ENCODE measurements at regions of chr4 and their contacts with region 1.

Region 1: GRCh38 chr4:163544407-163545038 is 50.0 kb downstream of the TMA16 start:
- DNase-seq: peak; percentile 76
- H3K4me3 ChIP-seq: no peak overlapping the region
- H3K27ac ChIP-seq: no peak overlapping the region
- H3K4me1 ChIP-seq: peaks cover 7% of the 10 kb centered on the region
- CTCF ChIP-seq: peak; percentile 99

Region 2: DNA sequence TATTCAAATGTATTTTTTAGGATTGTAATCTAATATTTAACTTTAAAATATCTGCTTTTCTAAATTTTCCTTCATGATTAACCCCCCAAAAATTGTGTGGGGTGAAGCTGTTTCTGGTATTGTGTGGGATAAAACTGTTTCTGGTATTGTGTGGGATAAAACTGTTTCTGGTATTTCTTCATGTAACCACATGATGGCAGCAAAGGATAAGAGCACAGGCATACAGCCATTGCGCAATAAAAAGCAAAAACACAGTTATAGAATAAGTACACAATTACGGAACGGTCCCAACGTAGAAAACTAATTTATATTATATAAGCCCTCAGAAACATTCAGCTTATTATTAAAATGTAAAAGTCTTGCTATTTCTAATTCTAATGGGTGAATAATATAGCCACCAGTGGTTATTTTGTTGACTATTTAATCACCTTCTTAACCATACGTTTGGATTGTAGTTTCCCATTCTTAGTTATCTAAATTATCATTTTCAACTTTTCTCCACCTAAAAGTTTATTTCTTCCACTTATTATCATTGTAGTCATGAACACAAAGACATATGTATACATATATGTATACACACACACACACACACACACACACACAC is 1046.9 kb before region 1 on chr4:
- CTCF ChIA-PET with region 1: no interaction called
- POLR2A ChIA-PET with region 1: no interaction called
- intact Hi-C with region 1: loop called (anchors 2 kb)
- DNase-seq: peak; percentile 53
- H3K4me3 ChIP-seq: no peak overlapping the region
- H3K27ac ChIP-seq: no peak overlapping the region
- H3K4me1 ChIP-seq: no peaks in the 10 kb centered on the region
- CTCF ChIP-seq: peak; percentile 90

Region 3: GRCh38 chr4:163048447-163048846 is 496.1 kb before region 1 on chr4:
- CTCF ChIA-PET with region 1: no interaction called
- POLR2A ChIA-PET with region 1: interaction called, 3 read pairs
- intact Hi-C with region 1: loop called (anchors 5 kb)
- DNase-seq: peak; percentile 44
- H3K4me3 ChIP-seq: no peak overlapping the region
- H3K27ac ChIP-seq: no peak overlapping the region
- H3K4me1 ChIP-seq: no peaks in the 10 kb centered on the region
- CTCF ChIP-seq: peak; percentile 70

Region 4: DNA sequence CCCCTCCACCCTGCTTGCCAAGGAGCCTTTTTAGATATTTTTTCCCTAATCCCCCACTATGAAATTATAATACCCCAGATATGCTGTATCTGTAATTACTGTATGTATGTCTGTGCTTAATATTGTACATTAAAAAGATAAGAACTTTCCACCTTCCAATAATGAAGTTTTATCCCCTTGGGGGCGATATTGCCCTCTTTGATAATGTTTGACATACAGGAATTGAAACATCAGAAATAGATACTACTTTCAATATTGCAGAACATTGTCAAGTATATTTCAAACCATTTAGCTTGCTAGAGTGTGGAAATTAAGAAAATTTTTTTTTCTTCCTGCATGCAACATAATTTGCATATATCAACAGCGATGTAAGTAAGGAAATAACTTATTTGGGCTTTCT is 436.8 kb before region 1 on chr4:
- CTCF ChIA-PET with region 1: no interaction called
- POLR2A ChIA-PET with region 1: no interaction called
- intact Hi-C with region 1: loop called (anchors 5 kb)
- DNase-seq: no peak
- H3K4me3 ChIP-seq: no peak overlapping the region
- H3K27ac ChIP-seq: no peak overlapping the region
- H3K4me1 ChIP-seq: no peaks in the 10 kb centered on the region
- CTCF ChIP-seq: peak; percentile 69

Region 5: GRCh38 chr4:163166041-163166579 is 378.4 kb before region 1 on chr4:
- CTCF ChIA-PET with region 1: no interaction called
- POLR2A ChIA-PET with region 1: no interaction called
- intact Hi-C with region 1: loop called (anchors 10 kb)
- DNase-seq: peak; percentile 64
- H3K4me3 ChIP-seq: peak overlapping the region; percentile 96
- H3K27ac ChIP-seq: peak overlapping the region; percentile 53
- H3K4me1 ChIP-seq: peaks cover 12% of the 10 kb centered on the region
- CTCF ChIP-seq: no peak

Region 6: DNA sequence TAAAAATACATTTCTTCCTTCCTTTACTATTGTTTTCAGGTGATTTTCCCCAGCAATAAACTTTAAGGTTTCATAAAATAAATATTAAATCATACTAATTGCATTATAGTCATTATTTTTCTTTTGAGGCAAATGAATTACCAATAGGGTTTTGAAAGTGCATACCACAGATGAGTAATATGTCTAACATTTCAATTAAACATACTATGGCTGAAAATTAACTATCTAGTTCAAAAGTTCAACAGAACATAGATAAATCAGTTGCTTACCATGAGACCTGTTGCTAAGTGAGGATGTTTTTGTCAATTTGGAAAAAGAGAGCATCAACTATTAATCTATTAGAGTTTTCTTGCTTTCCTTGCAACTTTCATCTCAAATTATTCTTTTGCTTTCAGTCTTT is 165.9 kb before region 1 on chr4:
- CTCF ChIA-PET with region 1: no interaction called
- POLR2A ChIA-PET with region 1: no interaction called
- intact Hi-C with region 1: loop called (anchors 10 kb)
- DNase-seq: no peak
- H3K4me3 ChIP-seq: no peak overlapping the region
- H3K27ac ChIP-seq: no peak overlapping the region
- H3K4me1 ChIP-seq: no peaks in the 10 kb centered on the region
- CTCF ChIP-seq: no peak

Region 7: DNA sequence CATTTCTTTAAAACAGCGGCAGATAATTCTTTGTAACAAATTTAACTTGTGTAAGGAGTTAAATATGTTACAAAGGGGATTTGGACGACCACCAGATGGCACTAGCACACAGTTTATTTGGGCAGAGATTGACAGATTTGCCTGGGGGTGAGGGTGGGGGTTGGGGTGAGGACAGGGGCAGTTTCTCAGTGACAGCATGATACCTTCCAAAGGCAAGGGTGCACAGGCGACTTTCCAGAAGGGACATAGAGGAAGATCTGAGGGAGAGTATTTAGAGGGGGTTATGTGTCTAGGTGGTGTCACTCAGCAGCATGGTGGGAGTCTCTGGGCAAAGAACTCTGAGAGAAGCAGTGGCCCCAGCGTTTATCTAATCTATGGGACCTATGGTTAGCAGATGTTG is 59.6 kb before region 1 on chr4:
- CTCF ChIA-PET with region 1: interaction called, 12 read pairs
- POLR2A ChIA-PET with region 1: interaction called, 4 read pairs
- intact Hi-C with region 1: loop called (anchors 1 kb)
- DNase-seq: peak; percentile 77
- H3K4me3 ChIP-seq: no peak overlapping the region
- H3K27ac ChIP-seq: no peak overlapping the region
- H3K4me1 ChIP-seq: peaks cover 30% of the 10 kb centered on the region
- CTCF ChIP-seq: peak; percentile 96

Region 8: GRCh38 chr4:163611784-163612445 is 67.4 kb after region 1 on chr4:
- CTCF ChIA-PET with region 1: no interaction called
- POLR2A ChIA-PET with region 1: no interaction called
- intact Hi-C with region 1: no loop called
- DNase-seq: no peak
- H3K4me3 ChIP-seq: peak overlapping the region; percentile 32
- H3K27ac ChIP-seq: no peak overlapping the region
- H3K4me1 ChIP-seq: peaks cover 64% of the 10 kb centered on the region
- CTCF ChIP-seq: no peak

Region 9: DNA sequence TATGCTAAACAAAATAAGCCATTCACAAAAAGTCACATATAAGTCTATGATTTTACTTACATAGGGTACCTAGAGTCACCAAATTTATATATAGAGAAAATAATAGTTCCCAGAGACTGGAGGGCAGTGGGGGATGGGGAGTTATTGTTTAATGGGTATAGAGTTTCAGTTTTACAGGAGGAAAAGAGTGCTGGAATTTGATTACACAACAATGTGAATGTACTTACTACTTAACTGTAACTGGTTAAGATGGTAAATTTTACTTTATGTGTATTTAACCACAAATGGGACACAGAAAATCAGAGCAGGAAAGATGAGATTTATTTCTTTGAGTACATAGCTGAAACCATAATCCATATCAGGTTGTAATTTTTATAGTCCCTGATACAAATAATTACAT is 94.4 kb after region 1 on chr4:
- CTCF ChIA-PET with region 1: no interaction called
- POLR2A ChIA-PET with region 1: no interaction called
- intact Hi-C with region 1: no loop called
- DNase-seq: no peak
- H3K4me3 ChIP-seq: no peak overlapping the region
- H3K27ac ChIP-seq: no peak overlapping the region
- H3K4me1 ChIP-seq: no peaks in the 10 kb centered on the region
- CTCF ChIP-seq: no peak